GM12878 (cell line): ENCODE measurements at regions of chr4 and their contacts with region 1.

Region 1: GRCh38 chr4:105061136-105061696 is 85.5 kb upstream of the TET2 start:
- DNase-seq: peak; percentile 85
- ATAC-seq: peak; percentile 68
- H3K4me3 ChIP-seq: peak overlapping the region; percentile 45
- H3K27ac ChIP-seq: peak overlapping the region; percentile 94
- H3K4me1 ChIP-seq: peaks cover 47% of the 10 kb centered on the region
- H3K27me3 ChIP-seq: no peaks in the 10 kb centered on the region
- CTCF ChIP-seq: no peak
- EP300 ChIP-seq: peak in 1 of 2 experiments; percentile 50; a peak in 2 of 4 replicates
- POLR2A ChIP-seq: no peak
- RAD21 ChIP-seq: 0 out of 2 replicates have a peak, but pooled peaks have one; percentile 9

Region 2: GRCh38 chr4:104064646-104065577 is 996.3 kb before region 1 on chr4:
- CTCF ChIA-PET with region 1: no interaction called
- POLR2A ChIA-PET with region 1: no interaction called
- RAD21 ChIA-PET with region 1: no interaction called
- SMC1A ChIA-PET with region 1: no interaction called
- in situ Hi-C with region 1: no loop called
- intact Hi-C with region 1: loop called (anchors 10 kb)
- DNase-seq: peak; percentile 23
- ATAC-seq: peak; percentile 97
- H3K4me3 ChIP-seq: no peak overlapping the region
- H3K27ac ChIP-seq: no peak overlapping the region
- H3K4me1 ChIP-seq: no peaks in the 10 kb centered on the region
- H3K27me3 ChIP-seq: no peaks in the 10 kb centered on the region
- CTCF ChIP-seq: peak; percentile 56 to 74 (median 58); a peak in 5 of 6 replicates
- EP300 ChIP-seq: no peak
- POLR2A ChIP-seq: no peak
- RAD21 ChIP-seq: peak; percentile 88

Region 3: DNA sequence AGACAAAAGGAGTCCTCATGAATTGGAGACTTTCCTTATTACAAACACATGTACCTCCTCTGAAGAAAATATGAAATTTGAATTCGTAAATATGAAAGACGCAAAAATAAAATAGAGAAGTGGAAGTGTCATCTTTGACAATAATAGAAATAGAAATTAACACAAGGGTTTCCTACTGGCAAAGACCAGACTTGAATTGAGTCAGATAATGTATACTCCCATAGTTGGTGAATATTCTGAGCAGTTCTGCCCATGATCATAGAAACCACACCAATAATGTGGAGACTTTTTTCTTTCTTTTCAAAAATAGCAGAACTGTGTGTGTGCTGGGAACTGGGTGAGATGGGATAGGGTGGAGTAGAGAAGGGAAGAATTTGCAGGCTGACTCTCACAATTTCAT is 192.3 kb before region 1 on chr4:
- CTCF ChIA-PET with region 1: interaction called, 3 read pairs
- POLR2A ChIA-PET with region 1: no interaction called
- RAD21 ChIA-PET with region 1: no interaction called
- SMC1A ChIA-PET with region 1: no interaction called
- in situ Hi-C with region 1: no loop called
- intact Hi-C with region 1: loop called (anchors 1 kb)
- DNase-seq: peak; percentile 79
- ATAC-seq: peak; percentile 93
- H3K4me3 ChIP-seq: peak overlapping the region; percentile 24; the same call in 1 of the 2 replicates
- H3K27ac ChIP-seq: peak overlapping the region; percentile 67
- H3K4me1 ChIP-seq: peaks cover 36% of the 10 kb centered on the region
- H3K27me3 ChIP-seq: no peaks in the 10 kb centered on the region
- CTCF ChIP-seq: no peak
- EP300 ChIP-seq: peak; percentile 92 to 96
- POLR2A ChIP-seq: no peak
- RAD21 ChIP-seq: peak; percentile 24; the same call in 1 of the 2 replicates

Region 4: DNA sequence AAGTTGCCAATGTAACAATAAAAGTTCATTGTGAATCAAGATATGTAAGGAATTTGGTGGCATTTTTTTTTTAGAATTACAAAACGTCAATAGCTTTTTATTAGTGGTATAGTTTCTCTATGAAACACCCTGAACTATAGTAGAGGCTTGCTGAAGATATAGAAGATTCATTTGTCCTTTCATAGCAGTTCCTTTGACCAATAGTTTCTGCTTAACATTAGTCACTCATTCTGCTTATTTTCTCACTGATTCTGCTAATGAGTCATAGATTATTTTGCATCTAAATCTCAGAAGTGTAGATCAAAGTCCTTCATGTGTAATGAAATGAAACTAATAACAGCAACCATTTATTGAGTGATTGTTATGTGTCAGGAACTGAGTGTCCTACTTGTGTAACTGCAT is 119.6 kb before region 1 on chr4:
- CTCF ChIA-PET with region 1: no interaction called
- POLR2A ChIA-PET with region 1: no interaction called
- RAD21 ChIA-PET with region 1: interaction called, 3 read pairs
- SMC1A ChIA-PET with region 1: interaction called, 3 read pairs
- in situ Hi-C with region 1: no loop called
- intact Hi-C with region 1: loop called (anchors 1 kb)
- DNase-seq: peak; percentile 37
- ATAC-seq: peak; percentile 80
- H3K4me3 ChIP-seq: no peak overlapping the region
- H3K27ac ChIP-seq: no peak overlapping the region
- H3K4me1 ChIP-seq: no peaks in the 10 kb centered on the region
- H3K27me3 ChIP-seq: no peaks in the 10 kb centered on the region
- CTCF ChIP-seq: no peak
- EP300 ChIP-seq: 0 out of 4 replicates have a peak, but pooled peaks of 1 of the 2 experiments have one; percentile 28
- POLR2A ChIP-seq: no peak
- RAD21 ChIP-seq: no peak

Region 5: DNA sequence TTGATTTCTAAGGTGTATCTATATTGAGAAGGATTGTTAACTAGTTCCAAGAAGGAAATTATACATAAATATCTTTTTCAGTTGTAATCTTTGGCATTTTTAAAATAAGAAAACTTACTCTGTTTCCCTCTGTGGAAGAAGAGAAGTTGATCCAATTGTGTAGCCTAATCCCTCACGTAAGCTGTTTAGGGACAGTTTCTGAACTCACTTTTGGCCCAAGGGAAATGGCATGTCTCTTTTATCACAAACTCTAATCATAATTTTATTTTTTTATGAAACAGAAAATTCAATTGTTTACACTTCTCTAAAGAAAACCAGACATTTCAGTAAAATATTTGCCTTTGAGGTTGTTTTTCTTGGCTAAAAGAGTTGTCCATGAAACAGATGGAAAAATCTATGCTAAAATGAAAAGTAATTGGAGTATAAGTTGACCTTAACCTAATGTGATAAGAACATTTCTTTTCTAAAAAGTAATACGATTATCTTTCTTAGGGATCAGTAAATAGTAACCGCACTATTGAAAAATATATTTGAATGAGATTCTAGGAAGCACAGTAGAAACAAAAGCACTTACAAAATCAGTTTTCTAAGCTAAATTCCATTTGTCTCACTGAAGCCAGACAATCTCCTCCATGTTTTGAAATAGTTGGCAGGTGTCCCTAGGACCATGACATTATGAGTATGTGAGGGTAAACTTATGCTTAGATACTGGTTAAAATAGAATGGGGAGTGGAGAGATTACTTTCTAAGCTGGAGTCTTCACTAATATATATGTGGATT is 65.1 kb after region 1 on chr4:
- CTCF ChIA-PET with region 1: no interaction called
- POLR2A ChIA-PET with region 1: no interaction called
- RAD21 ChIA-PET with region 1: no interaction called
- SMC1A ChIA-PET with region 1: no interaction called
- in situ Hi-C with region 1: no loop called
- intact Hi-C with region 1: loop called (anchors 5 kb)
- DNase-seq: no peak
- ATAC-seq: peak; percentile 17; the same call in 1 of the 3 replicates
- H3K4me3 ChIP-seq: no peak overlapping the region
- H3K27ac ChIP-seq: no peak overlapping the region
- H3K4me1 ChIP-seq: no peaks in the 10 kb centered on the region
- H3K27me3 ChIP-seq: no peaks in the 10 kb centered on the region
- CTCF ChIP-seq: no peak
- EP300 ChIP-seq: no peak
- POLR2A ChIP-seq: no peak
- RAD21 ChIP-seq: no peak

Region 6: DNA sequence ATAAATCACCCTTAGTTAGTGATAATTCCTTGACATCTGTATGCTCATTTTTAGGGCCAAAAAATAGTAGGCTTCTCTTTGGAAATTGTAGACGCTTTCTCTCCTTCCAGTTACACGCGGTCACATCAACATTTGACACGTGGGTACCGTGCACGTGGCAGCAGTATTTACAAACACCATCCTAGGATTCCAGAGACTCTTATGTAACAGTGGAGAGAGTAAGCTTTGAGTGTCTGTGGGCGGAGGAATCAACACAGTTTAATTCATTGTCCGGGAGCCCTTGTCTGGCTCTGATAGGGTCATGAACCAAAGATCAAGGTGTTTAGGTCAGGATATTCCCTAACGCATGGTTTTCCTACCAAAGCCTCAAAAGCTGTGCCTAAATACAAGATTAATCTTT is 97.6 kb after region 1 on chr4:
- CTCF ChIA-PET with region 1: no interaction called
- POLR2A ChIA-PET with region 1: no interaction called
- RAD21 ChIA-PET with region 1: no interaction called
- SMC1A ChIA-PET with region 1: no interaction called
- in situ Hi-C with region 1: no loop called
- intact Hi-C with region 1: no loop called
- DNase-seq: no peak
- ATAC-seq: no peak
- H3K4me3 ChIP-seq: no peak overlapping the region
- H3K27ac ChIP-seq: no peak overlapping the region
- H3K4me1 ChIP-seq: peaks cover 5% of the 10 kb centered on the region; the same call in 1 of the 2 replicates
- H3K27me3 ChIP-seq: no peaks in the 10 kb centered on the region
- CTCF ChIP-seq: no peak
- EP300 ChIP-seq: no peak
- POLR2A ChIP-seq: no peak
- RAD21 ChIP-seq: no peak

Region 7: DNA sequence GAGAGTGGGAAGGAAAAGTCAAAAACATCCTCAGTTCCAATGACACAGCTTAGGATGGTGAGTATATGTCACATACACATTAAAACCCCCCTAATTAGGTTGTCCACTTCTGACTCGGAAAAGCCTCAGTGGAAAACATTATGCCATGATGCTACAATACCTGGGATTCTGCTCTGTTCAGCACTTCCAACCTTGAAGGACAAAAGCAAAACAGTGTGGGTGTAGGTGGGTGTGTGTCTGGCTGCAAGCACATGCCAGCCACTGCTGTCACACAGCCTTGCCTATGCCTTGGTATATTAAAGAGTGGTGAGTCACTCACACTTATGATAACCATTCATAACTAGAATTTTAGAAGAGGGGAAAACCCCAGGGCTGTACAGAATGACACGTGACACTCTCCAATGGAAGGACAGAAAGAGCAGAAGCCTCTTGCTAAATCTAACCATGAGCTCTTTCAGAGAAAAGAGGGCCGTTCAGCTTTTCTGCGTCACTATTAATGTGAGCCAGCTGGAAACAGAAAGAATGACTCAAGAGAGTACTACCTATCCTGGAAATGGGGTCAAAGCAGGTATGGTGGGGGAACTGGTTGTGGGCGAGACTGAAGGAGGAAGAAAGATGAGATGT is 245.1 kb after region 1 on chr4:
- CTCF ChIA-PET with region 1: no interaction called
- POLR2A ChIA-PET with region 1: no interaction called
- RAD21 ChIA-PET with region 1: interaction called, 5 read pairs
- SMC1A ChIA-PET with region 1: interaction called, 3 read pairs
- in situ Hi-C with region 1: no loop called
- intact Hi-C with region 1: loop called (anchors 1 kb)
- DNase-seq: peak; percentile 91
- ATAC-seq: peak; percentile 91
- H3K4me3 ChIP-seq: peak overlapping the region; percentile 24; the same call in 1 of the 2 replicates
- H3K27ac ChIP-seq: peak overlapping the region; percentile 86
- H3K4me1 ChIP-seq: peaks cover 14% of the 10 kb centered on the region
- H3K27me3 ChIP-seq: no peaks in the 10 kb centered on the region
- CTCF ChIP-seq: no peak
- EP300 ChIP-seq: peak; percentile 75 to 77; a peak in 3 of 4 replicates
- POLR2A ChIP-seq: peak; percentile 43; the same call in 1 of the 2 replicates
- RAD21 ChIP-seq: 0 out of 2 replicates have a peak, but pooled peaks have one; percentile 3